Right ventricle myocardium inferior (tissue), 1 donor: ENCODE measurements at regions of chr5 and their contacts with region 1.

Region 1: DNA sequence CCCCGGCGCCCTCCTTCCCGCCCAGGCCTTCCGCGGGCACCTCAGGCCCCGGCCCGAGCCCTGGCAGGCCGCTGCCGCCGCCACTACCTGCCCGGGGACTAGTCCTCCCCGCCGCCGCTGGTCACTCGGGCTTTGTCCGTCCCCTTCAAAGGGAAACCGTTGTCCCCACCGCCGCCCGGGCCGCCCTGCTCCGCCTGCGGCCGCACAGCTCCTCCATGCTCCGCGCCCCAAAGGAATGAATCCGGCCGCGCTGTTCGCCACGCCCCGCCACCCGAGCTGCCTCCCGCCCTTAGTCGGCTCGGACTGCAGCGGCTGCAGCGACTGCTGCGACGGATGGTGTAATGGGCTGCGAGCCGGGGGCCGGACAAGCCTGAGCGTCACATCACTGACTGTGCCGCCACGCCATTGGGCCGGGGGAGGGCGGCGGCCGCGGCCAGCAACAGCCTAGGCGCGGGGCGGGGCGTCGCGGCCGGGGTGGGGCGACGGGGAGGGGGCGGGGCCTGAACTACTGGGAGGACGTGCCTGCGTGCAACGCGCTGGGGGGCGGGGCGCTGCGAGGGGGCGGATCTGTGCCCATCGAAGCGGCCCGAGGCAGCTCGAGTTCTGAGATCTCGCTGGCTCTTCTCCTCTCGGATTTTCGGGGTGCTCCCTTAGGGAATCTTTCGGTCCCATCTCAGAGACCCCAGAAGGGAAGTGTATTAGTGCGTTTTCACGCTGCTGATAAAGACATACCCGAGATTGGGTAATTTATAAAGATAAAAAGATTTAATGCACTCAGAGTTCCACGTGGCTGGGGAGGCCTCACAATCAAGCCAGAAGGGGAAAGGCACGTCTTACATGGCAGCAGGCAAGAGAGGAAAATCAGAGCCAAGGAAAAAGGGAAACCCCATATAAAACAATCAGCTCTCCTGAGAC is at the start of gene FEM1C:
- DNase-seq: peak; percentile 99
- ATAC-seq: peak; percentile 98
- total RNA-seq, gene FEM1C: 46.9 TPM

Region 2: DNA sequence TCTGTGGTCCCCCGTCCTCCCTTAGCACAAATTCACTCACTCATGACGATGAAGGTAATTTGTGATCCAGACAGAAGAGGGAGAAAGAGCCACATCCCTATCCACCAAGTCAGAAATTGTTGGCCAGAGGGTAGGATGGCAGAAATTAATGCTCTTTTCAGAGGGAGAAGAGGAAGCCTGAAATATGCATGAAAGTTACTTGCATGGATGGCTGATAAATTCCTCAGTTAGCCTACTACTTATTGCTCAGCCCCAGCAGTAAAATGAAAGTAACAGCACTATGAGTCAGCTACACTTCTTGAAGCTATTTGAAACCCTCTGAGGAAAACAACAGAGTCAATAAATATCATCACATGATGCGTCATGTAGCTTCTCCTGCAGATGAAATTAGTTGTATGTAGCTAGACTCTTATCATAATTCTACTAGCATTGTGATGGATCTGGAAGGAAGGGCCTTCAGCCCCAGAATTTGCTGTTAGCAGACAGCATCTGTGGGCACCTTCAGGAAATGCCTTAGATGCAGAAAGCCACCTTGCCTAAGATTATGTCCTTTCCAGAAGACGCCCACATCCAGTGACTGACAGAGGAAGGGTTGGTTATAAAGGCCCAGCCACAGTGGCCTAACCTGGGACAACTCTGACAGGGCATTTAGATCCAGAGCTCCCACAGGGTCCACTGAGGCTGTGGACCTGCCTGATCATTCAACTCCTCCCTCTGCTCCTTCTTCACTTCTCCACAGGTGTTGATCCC is 167.1 kb before region 1 on chr5:
- intact Hi-C with region 1: loop called (anchors 1 kb)
- DNase-seq: no peak
- ATAC-seq: peak; percentile 80

Region 3: DNA sequence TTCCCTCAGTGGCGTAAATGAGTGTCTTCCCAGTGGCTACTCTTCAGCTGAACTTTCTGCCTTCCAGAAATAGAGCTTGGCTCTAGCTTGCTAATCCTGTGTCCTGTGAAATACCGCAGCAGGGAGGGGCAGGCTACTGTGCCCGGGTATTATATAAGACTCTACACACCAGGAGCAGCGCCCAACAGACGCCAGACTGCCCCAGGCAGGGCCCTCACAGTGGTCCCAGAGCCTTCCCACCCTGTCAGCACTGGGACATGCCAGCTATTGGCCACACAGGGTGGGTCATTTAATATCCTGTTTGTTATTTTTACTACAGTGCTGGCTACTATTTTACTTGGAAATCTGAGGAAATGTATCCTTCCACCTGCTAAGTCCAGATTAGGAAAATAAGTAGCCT is 121.2 kb before region 1 on chr5:
- intact Hi-C with region 1: loop called (anchors 2 kb)
- DNase-seq: peak; percentile 76
- ATAC-seq: peak; percentile 96

Region 4: DNA sequence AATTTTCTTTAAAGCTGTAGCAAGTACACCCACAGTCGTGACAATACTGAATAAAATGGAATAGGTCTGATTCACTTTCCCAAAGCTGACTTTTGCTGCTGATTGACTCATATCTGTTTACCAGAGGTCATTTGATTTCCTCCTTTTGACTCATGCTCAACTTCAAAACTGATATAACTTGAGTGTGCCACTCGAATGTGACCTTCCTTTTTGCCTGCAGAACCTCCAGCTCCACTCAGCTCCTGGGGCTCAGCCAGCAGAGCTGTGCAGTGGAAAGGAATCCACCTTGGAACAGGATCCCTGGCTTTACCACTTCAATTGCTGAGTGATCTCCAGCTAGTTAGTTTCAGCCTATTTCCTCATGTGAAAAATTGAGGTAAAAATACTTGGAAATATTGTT is 84.2 kb before region 1 on chr5:
- intact Hi-C with region 1: loop called (anchors 2 kb)
- DNase-seq: peak; percentile 85
- ATAC-seq: peak; percentile 90

Region 5: GRCh38 chr5:115573133-115573532 is 28.4 kb after region 1 on chr5:
- intact Hi-C with region 1: loop called (anchors 2 kb)
- DNase-seq: no peak
- ATAC-seq: no peak

Region 6: DNA sequence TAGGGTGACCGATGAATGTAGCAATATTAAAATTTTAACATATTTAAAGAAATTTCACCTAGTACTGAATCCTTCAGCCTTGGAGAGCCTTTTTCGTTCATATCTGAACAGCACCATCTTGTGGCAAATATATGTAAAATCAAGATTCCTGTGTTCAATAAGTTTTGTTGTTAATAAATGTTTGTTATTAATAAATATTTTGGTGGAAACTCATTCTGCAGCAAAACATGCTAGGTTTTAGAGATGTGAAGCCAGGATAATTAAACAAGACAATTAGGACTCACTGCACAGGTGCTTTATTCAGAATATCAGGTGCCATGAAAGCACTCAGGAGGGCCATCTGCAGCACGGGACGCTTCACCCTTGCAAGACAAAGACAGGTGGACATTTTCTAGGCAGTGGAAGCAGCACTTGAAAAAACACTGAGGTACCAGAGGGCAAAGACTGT is 41.9 kb after region 1 on chr5:
- intact Hi-C with region 1: loop called (anchors 5 kb)
- DNase-seq: no peak
- ATAC-seq: no peak

Region 7: GRCh38 chr5:115625579-115626444 is 81.1 kb after region 1 on chr5 and contains the start of gene TMED7:
- intact Hi-C with region 1: loop called (anchors 2 kb)
- DNase-seq: peak; percentile 100
- ATAC-seq: peak; percentile 99
- total RNA-seq, gene TMED7: 66.6 TPM